Adrenal gland (tissue), 19 donors: ENCODE measurements at regions of chr11 and their contacts with region 1.

Region 1: DNA sequence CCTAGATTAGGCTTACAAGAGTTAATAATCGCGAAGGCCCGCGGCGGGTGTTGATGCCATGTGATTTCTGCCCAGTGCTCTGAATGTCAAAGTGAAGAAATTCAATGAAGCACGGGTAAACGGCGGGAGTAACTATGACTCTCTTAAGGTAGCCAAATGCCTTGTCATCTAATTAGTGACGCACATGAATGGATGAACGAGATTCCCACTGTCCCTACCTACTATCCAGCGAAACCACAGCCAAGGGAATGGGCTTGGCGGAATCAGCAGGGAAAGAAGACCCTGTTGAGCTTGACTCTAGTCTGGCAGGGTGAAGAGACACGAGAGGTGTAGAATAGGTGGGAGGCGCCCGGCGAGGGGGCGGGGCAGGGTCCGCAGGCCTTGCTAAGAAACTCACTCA is 65.5 kb downstream of the AAMDC start:
- DNase-seq: no peak
- H3K4me3 ChIP-seq: no peak overlapping the region
- H3K27ac ChIP-seq: no peak overlapping the region
- H3K4me1 ChIP-seq: peaks cover 0 to 5% of the 10 kb centered on the region in 2 donors
- H3K27me3 ChIP-seq: no peaks in the 10 kb centered on the region
- CTCF ChIP-seq: no peak
- POLR2A ChIP-seq: no peak

Region 2: GRCh38 chr11:77833302-77833701 is 53.1 kb before region 1 on chr11:
- intact Hi-C with region 1: loop called in 1 of 2 experiments (anchors 10 kb)
- DNase-seq: no peak
- H3K4me3 ChIP-seq: no peak overlapping the region
- H3K27ac ChIP-seq: no peak overlapping the region
- H3K4me1 ChIP-seq: no peaks in the 10 kb centered on the region
- H3K27me3 ChIP-seq: no peaks in the 10 kb centered on the region
- CTCF ChIP-seq: no peak
- POLR2A ChIP-seq: no peak

Region 3: GRCh38 chr11:78019821-78020220 is 133.4 kb after region 1 on chr11:
- intact Hi-C with region 1: no loop called
- DNase-seq: no peak
- H3K4me3 ChIP-seq: no peak overlapping the region
- H3K27ac ChIP-seq: peak overlapping the region in 1 of 5 donors; percentile 12
- H3K4me1 ChIP-seq: peaks cover 10 to 13% of the 10 kb centered on the region in 2 donors
- H3K27me3 ChIP-seq: no peaks in the 10 kb centered on the region
- CTCF ChIP-seq: no peak
- POLR2A ChIP-seq: no peak

Region 4: DNA sequence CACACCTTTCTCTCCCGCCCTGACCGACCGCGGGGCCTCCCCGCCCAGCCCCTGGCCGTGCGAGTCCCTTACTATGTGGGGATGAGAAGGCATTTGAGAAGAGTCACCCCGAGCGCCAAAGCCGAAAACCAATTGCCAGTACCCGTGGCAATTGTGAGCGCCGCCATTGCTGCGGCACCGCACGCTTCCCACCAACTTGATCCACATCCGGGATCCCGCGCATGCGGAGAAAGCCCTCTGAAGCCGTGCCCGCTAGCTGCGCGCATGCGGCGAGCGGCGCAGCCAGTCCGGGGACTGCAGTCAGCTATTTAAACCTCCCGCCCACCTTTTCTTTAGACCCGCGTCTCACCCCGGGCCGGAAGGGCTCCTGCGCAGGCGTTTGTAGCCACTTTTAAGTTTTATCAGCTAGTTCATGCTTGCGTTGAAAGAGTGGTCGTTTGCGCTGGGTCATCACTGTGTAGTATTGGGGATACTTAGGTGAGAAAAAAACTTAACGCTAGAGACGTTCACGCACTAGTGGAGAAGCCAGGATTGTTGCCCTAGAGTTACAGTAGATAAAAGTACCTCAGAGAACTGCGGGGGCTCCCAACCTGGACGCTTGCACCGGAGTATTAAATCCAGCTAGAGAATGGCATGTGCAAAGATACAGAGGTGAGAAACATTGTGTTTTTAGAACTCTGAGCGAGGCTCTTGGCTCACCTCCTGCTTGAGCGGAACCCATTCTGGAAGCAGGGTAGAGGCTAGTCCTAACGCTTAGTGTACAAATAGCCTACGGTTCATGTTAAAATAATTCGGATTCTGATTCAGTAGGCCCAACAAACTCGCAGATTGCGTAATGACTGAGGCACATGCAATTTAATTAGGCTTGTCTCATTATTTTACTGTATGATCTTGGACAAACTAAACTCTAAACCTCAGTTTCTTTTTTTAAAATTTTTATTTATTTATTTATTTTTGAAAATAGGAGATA is 253.3 kb after region 1 on chr11 and contains the start of gene ALG8:
- intact Hi-C with region 1: no loop called
- DNase-seq: peak; percentile 95 to 98 (median 97)
- H3K4me3 ChIP-seq: peak within 1 kb of the TSS; percentile 31 to 80 (median 64)
- H3K27ac ChIP-seq: peak within 1 kb of the TSS in 4 of 5 donors; percentile 38 to 81 (median 60)
- H3K4me1 ChIP-seq: peaks cover 11 to 23% of the 10 kb centered on the region in 2 donors
- H3K27me3 ChIP-seq: no peaks in the 10 kb centered on the region
- CTCF ChIP-seq: no peak
- POLR2A ChIP-seq: peak; percentile 59 to 84
- total RNA-seq, gene ALG8: 28.9 to 64.0 (median 49.2) TPM